ENCODE measurements at regions of chr3 and their contacts with region 1.

Region 1: DNA sequence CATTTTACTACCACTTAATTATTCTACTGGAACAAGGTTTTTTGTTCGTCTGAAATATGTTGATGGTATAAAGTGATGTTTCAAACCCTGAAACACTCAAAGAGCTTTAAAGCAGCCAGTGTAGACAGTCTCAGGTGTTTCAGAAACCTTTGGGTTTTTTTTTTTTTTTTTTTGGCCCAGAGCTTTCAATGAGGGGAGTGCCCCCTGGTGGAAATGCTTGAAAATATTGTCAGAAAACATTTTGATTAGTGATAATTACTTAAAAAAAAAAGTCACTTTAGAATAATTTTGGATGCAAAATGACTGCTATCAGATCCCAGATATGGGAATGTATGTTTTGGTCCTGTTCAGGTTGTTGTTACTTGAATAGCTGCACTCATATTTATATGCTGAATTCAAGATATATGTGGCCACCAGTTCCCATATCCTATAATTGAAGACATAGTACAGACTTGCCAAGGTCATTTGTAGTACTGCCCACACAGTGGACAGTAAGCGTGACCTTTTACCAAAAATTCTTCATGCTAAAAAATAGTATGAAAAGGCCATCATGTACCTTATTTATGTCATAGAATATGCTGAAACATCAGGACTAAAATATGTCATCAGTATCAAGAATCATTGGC is 35.9 kb downstream of the SATB1 start:
- DNase-seq: peak; percentile 5
- ATAC-seq: no peak
- H3K4me3 ChIP-seq: no peak overlapping the region
- H3K27ac ChIP-seq: no peak overlapping the region
- H3K4me1 ChIP-seq: no peaks in the 10 kb centered on the region
- H3K27me3 ChIP-seq: no peaks in the 10 kb centered on the region
- CTCF ChIP-seq: peak; percentile 57
- POLR2A ChIP-seq: no peak
- RAD21 ChIP-seq: peak; percentile 32

Region 2: GRCh38 chr3:17852217-17852616 is 537.0 kb before region 1 on chr3:
- CTCF ChIA-PET with region 1: no interaction called
- POLR2A ChIA-PET with region 1: no interaction called
- dilution Hi-C with region 1: no loop called
- in situ Hi-C with region 1: no loop called
- intact Hi-C with region 1: loop called (anchors 10 kb)
- DNase-seq: no peak
- ATAC-seq: no peak
- H3K4me3 ChIP-seq: no peak overlapping the region
- H3K27ac ChIP-seq: no peak overlapping the region
- H3K4me1 ChIP-seq: no peaks in the 10 kb centered on the region
- H3K27me3 ChIP-seq: no peaks in the 10 kb centered on the region
- CTCF ChIP-seq: no peak
- POLR2A ChIP-seq: no peak
- RAD21 ChIP-seq: no peak

Region 3: GRCh38 chr3:17894434-17895060 is 494.7 kb before region 1 on chr3:
- CTCF ChIA-PET with region 1: no interaction called
- POLR2A ChIA-PET with region 1: no interaction called
- dilution Hi-C with region 1: no loop called
- in situ Hi-C with region 1: no loop called
- intact Hi-C with region 1: loop called (anchors 2 kb)
- DNase-seq: peak; percentile 45
- ATAC-seq: peak; percentile 67
- H3K4me3 ChIP-seq: no peak overlapping the region
- H3K27ac ChIP-seq: no peak overlapping the region
- H3K4me1 ChIP-seq: no peaks in the 10 kb centered on the region
- H3K27me3 ChIP-seq: no peaks in the 10 kb centered on the region
- CTCF ChIP-seq: peak; percentile 40
- POLR2A ChIP-seq: no peak
- RAD21 ChIP-seq: peak; percentile 57

Region 4: GRCh38 chr3:18401300-18401961 is 12.2 kb after region 1 on chr3:
- CTCF ChIA-PET with region 1: interaction called, 15 read pairs
- POLR2A ChIA-PET with region 1: no interaction called
- dilution Hi-C with region 1: no loop called
- in situ Hi-C with region 1: no loop called
- intact Hi-C with region 1: no loop called
- DNase-seq: no peak
- ATAC-seq: no peak
- H3K4me3 ChIP-seq: no peak overlapping the region
- H3K27ac ChIP-seq: no peak overlapping the region
- H3K4me1 ChIP-seq: no peaks in the 10 kb centered on the region
- H3K27me3 ChIP-seq: no peaks in the 10 kb centered on the region
- CTCF ChIP-seq: no peak
- POLR2A ChIP-seq: no peak
- RAD21 ChIP-seq: no peak